GM18951 (cell line): ENCODE measurements at regions of chr5 and their contacts with region 1.

Region 1: GRCh38 chr5:174418928-174419796 is 305.2 kb upstream of the MSX2 start:
- POLR2A ChIP-seq: no peak

Region 2: GRCh38 chr5:174690271-174690670 is 271.1 kb after region 1 on chr5:
- in situ Hi-C with region 1: no loop called
- POLR2A ChIP-seq: no peak

Region 3: DNA sequence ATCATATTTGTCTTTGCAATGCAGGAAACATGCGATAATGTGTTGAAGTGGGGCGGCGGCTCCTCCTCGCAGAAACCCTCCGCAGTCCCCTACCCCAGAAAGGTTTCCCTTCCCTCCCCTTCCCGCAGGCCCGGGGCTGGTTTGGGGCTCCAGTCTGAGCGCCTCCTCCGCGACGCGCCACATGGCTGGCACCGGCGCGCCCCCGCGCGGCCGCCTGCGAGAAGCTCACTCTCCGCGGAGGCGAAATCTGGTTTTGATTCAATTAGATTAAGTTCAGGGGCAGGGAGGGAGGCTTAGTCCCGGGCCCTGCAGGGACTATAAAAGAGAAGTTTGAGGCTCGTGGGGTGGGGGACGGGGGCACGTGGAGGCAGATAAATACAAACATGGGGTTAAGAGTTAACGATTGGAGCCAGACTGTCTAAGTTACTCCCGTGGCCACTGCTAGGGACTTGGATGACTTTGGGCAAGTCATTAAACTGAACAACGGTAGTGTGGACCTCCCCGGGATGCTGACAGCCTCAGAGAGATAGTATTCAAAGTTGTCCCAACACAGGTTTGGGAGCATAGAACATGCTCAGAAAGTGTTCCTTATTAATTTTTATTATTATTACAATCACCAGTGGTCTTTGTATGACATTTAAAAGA is 374.6 kb after region 1 on chr5:
- in situ Hi-C with region 1: loop called (anchors 10 kb)
- POLR2A ChIP-seq: no peak

Region 4: DNA sequence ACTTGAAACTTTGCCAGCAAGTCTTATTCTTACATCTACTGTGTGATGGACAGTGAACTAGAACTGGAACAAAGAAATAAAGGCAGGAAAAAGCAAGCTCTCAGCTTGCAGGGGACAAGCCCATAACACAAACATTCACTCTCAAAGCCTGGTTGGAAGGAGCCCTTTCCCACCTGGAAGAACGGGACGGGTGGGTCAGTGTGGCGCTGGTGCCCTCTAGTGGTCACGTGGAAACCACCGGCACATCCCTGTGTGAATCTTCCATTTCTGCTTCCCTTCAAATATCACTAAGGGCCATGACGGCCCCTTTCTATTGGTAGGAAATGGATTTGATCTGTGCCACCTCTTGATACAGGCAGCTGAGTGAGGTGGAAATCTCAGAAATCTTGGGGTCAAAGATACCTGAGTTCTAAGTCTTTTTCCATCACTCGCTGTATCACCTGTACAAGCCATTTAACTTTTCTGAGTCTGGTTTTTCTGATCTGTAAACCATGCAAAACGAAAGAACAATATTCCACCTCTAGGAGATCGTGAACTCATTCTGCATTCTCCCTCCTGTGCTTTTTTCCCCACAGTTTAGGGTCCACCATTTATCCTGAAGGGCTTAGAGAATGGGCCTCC is 516.8 kb after region 1 on chr5:
- in situ Hi-C with region 1: loop called (anchors 25 kb)
- POLR2A ChIP-seq: no peak